ENCODE measurements at regions of chr14 and their contacts with region 1.

Region 1: GRCh38 chr14:22391912-22392421 is 197.1 kb downstream of the DAD1 start:
- DNase-seq: peak; percentile 34
- H3K4me3 ChIP-seq: no peak overlapping the region
- H3K27ac ChIP-seq: no peak overlapping the region
- H3K4me1 ChIP-seq: no peaks in the 10 kb centered on the region
- H3K27me3 ChIP-seq: peaks cover 31% of the 10 kb centered on the region
- CTCF ChIP-seq: peak; percentile 77

Region 2: DNA sequence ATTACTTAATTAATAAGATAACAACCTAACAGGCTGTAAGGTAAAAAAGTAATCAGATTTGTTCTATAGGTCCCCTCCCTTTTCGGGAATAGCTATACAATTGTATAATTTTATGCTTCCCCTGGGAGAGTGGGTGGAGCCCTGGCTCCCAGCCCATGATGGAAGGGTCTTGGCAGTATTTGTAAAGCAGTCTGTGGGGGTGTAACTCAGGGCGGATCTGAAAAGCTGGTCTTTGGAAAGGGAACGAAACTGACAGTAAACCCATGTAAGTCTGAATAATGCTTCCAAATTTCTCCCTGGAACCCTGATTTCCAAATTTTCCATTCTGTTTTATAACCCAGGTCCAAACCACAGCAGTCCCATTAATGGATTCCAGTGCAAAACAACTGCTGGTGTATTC is 86.7 kb after region 1 on chr14:
- intact Hi-C with region 1: loop called (anchors 5 kb)
- DNase-seq: peak; percentile 38
- H3K4me3 ChIP-seq: no peak overlapping the region
- H3K27ac ChIP-seq: peak overlapping the region; percentile 13
- H3K4me1 ChIP-seq: peaks cover 87% of the 10 kb centered on the region
- H3K27me3 ChIP-seq: no peaks in the 10 kb centered on the region
- CTCF ChIP-seq: no peak

Region 3: DNA sequence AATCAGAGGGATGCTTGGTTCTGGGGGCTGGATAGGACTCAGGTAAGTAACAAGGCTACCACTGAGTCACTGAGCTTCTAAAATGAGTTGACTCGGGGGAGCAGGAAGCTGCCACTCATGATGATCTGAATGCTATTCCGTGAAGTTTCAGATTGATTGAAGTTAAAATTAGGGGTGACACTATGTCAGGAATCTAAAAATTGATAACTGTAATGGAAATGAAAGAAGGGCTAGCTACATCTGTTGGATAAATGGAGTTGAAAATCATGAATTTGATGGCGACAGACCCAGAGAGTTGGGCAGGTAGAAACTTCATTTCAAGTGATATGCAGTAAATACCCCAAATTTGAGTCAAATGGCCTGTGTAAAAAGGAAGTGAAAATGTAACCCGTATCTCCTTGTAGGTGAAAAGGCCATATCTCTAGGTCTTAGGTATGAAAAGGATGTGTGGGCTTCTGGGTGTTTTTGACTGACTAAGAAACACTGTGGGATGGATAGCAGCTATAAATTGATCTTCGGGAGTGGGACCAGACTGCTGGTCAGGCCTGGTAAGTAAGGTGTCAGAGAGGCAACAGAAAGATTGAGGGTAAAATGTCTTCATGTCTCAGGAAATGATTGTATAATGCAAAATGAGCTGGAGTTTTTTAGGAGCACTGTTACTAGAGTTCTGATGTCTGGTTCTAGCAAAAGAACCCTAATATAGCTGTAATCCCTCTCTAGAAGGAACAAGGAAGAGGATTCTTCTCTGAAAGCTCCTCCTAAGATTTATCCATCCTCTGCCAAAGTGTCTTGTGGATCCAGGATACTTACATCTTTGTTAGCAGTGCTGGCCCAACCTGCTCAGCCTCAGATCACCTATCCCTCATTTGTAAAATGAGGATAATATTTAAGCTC is 139.7 kb after region 1 on chr14:
- intact Hi-C with region 1: no loop called
- DNase-seq: no peak
- H3K4me3 ChIP-seq: no peak overlapping the region
- H3K27ac ChIP-seq: no peak overlapping the region
- H3K4me1 ChIP-seq: peaks cover 25% of the 10 kb centered on the region
- H3K27me3 ChIP-seq: no peaks in the 10 kb centered on the region
- CTCF ChIP-seq: no peak

Region 4: DNA sequence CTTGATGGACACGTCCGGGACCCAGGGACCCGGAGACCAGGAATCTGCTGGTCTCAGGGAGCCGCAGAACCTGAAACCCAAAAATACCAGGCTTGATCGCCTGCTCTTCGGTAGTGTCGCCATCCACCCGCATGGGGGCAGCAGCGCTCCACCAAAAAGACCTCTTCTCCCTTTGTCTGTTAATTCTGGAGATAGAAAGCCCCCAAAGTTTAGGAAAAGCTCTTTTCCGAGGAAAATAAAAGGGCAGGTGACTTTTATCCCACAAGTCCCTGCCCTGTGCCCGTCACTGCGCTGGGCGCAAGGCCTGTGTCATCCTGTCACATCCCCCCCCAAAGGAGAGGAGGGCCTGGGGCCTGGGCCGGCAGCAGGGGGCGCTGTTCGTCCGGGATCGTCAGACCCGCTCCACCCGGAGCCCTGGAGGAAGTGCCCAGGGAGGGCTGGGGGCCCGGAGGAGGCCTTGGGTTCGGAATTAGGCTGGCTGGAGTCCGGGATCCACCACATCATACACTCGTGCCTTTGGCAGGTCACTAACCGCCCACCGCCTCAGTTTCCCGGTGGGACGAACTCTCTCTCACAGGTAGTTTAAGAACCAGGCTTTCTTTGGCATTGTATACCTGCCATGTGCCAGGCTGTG is 165.1 kb after region 1 on chr14:
- intact Hi-C with region 1: loop called (anchors 10 kb)
- DNase-seq: peak; percentile 83
- H3K4me3 ChIP-seq: peak overlapping the region; percentile 49
- H3K27ac ChIP-seq: peak overlapping the region; percentile 59
- H3K4me1 ChIP-seq: peaks cover 44% of the 10 kb centered on the region
- H3K27me3 ChIP-seq: no peaks in the 10 kb centered on the region
- CTCF ChIP-seq: peak; percentile 98

Region 5: DNA sequence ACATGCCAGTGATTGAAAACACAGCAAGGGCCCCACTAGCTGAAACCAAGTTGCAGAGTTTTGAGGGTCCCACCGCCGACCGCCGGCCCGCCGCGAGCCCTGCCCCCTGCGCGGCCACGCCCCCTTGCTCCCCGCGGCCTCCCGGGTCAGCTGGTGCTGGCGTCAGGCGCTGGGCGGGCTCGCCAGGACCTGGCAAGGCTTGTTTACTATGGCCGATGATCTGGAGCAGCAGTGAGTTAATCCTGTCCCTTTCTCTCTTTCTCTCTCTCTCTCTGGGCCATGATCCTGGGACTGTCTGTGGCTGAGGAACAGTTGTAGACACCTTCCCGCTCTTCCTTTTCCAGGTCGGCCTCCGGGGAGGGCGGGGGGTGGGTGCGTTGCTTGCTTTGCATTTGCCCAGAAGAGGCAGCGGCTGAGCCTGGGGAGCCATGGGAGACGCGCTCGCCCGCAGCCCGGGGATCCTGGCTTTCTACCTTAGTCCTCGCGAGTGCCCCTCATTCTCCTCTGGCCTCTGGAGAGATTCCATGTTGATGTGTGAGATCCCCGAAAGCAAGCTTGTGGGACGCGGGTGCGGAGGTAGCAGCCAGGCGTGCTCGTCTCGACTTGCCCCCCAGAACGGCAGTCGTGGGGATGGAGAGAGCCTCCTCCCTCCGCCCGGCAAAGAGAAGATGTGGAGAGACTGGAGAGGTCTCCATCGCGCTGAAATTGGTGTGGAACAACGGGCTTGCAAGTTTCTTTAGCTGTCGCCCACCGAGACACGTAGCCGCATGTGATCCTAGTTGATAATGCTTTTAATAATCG is 206.3 kb after region 1 on chr14 and contains the start of gene ABHD4:
- intact Hi-C with region 1: no loop called
- DNase-seq: peak; percentile 87
- H3K4me3 ChIP-seq: peak within 1 kb of the TSS; percentile 84
- H3K27ac ChIP-seq: peak within 1 kb of the TSS; percentile 85
- H3K4me1 ChIP-seq: peaks cover 30% of the 10 kb centered on the region
- H3K27me3 ChIP-seq: no peaks in the 10 kb centered on the region
- CTCF ChIP-seq: no peak
- total RNA-seq, gene ABHD4: 23.2 TPM

Region 6: GRCh38 chr14:22622255-22622654 is 230.3 kb after region 1 on chr14:
- intact Hi-C with region 1: no loop called
- DNase-seq: no peak
- H3K4me3 ChIP-seq: no peak overlapping the region
- H3K27ac ChIP-seq: no peak overlapping the region
- H3K4me1 ChIP-seq: peaks cover 3% of the 10 kb centered on the region
- H3K27me3 ChIP-seq: no peaks in the 10 kb centered on the region
- CTCF ChIP-seq: no peak

Region 7: DNA sequence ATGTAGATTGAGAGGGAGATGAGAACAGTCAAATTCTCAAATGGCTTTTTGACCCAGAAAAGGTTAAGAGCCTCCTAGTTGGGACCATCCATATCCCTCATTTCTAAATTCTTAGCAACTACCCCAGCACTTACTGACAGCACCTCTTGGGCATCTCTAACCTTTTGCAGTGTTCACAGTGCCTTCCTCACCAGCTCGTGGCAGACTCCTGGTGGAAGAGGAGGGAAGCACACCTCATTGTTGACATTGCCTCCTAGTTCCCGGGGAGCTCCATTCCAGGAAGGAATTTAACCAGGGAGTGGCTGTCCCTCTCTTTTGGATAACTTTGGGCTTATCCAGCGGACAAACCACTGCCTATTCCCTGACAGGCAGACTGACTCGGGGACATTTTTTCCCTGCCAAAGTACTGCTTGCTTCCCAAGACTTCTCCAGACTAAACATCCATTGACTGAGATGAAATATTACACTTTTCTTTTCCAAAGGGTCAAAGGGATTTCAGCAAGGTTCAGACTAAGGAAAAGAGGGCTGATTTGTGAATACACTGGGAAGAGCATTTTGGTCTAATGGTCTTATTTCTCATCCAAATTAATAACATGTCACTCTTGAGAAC is 261.1 kb after region 1 on chr14:
- intact Hi-C with region 1: loop called (anchors 5 kb)
- DNase-seq: peak; percentile 25
- H3K4me3 ChIP-seq: no peak overlapping the region
- H3K27ac ChIP-seq: no peak overlapping the region
- H3K4me1 ChIP-seq: peaks cover 8% of the 10 kb centered on the region
- H3K27me3 ChIP-seq: no peaks in the 10 kb centered on the region
- CTCF ChIP-seq: peak; percentile 85

Region 8: GRCh38 chr14:23020143-23021128 is 628.5 kb after region 1 on chr14:
- intact Hi-C with region 1: no loop called
- DNase-seq: no peak
- H3K4me3 ChIP-seq: no peak overlapping the region
- H3K27ac ChIP-seq: no peak overlapping the region
- H3K4me1 ChIP-seq: peaks cover 3% of the 10 kb centered on the region
- H3K27me3 ChIP-seq: no peaks in the 10 kb centered on the region
- CTCF ChIP-seq: no peak

Measured in left ventricle myocardium inferior (tissue), 1 donor.